ENCODE measurements at regions of chr20 and their contacts with region 1.

Region 1: DNA sequence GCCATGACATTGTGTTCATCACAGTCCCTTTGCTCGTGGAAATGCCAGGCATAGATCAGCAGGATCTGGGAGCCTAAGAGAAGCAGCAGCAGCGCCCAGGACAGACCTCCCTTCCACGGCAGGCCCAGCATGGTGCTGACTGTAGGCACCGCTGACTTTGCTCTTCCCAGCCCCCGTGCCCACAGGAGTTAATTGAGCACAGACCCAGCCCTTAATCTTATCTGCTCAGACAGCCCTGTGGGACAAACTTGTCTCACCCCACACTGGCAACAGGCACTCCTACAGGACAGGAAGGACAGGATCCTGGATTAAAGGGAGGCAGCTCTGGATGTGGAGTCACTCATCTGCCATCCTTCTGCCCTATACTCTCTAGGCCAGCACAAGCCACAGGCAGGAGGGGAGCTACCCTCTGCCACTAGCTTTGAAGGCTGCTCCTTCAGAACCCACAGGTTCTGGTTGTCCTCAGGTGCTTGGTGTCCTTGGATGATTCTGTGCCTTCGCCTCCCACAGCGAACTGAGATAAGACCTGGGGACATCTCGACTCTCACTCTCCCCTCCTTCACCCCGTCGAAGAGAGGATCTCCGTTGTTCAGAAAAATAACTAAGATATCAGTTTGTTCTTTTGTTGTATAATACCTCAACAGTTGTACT is at the start of gene CST9L:
- DNase-seq: no peak
- H3K4me3 ChIP-seq: no peak within 1 kb of the TSS
- H3K27ac ChIP-seq: no peak within 1 kb of the TSS
- H3K4me1 ChIP-seq: no peaks in the 10 kb centered on the region
- H3K27me3 ChIP-seq: no peaks in the 10 kb centered on the region
- CTCF ChIP-seq: no peak
- EP300 ChIP-seq: no peak
- POLR2A ChIP-seq: no peak
- total RNA-seq, gene CST9L: not detected

Region 2: GRCh38 chr20:23456409-23456808 is 112.0 kb before region 1 on chr20:
- in situ Hi-C with region 1: loop called in 1 of 4 experiments (anchors 25 kb)
- intact Hi-C with region 1: no loop called
- DNase-seq: no peak
- H3K4me3 ChIP-seq: no peak overlapping the region
- H3K27ac ChIP-seq: no peak overlapping the region
- H3K4me1 ChIP-seq: no peaks in the 10 kb centered on the region
- H3K27me3 ChIP-seq: no peaks in the 10 kb centered on the region
- CTCF ChIP-seq: no peak
- EP300 ChIP-seq: no peak
- POLR2A ChIP-seq: no peak

Measured in transverse colon (tissue), 4 donors.